Left colon (tissue), 2 donors: ENCODE measurements at regions of chr15 and their contacts with region 1.

Region 1: GRCh38 chr15:72671535-72671934 is 14.4 kb downstream of the HIGD2B start:
- DNase-seq: no peak
- ATAC-seq: no peak

Region 2: GRCh38 chr15:72464251-72464650 is 207.3 kb before region 1 on chr15:
- intact Hi-C with region 1: loop called in 1 of 2 experiments (anchors 10 kb)
- DNase-seq: no peak
- ATAC-seq: no peak

Region 3: DNA sequence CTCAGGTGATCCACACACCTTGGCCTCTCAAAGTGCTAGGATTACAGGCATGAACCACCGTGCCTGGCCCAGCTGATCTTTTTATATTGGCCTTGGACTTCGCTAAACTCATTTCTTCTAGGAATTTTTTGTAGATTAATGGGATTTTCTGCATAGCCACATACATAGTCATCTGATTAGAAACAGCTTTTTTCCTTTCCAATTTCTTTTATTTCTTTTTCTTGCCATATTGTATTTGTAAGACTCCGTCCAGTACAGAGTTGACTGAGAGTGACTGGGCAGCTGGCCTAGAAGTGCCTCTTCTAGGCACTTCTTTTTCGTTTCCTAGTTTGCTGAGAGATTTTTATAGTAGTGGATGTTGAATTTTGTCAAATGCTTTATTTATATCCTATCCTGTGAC is 160.0 kb before region 1 on chr15:
- intact Hi-C with region 1: no loop called
- DNase-seq: no peak
- ATAC-seq: no peak

Region 4: DNA sequence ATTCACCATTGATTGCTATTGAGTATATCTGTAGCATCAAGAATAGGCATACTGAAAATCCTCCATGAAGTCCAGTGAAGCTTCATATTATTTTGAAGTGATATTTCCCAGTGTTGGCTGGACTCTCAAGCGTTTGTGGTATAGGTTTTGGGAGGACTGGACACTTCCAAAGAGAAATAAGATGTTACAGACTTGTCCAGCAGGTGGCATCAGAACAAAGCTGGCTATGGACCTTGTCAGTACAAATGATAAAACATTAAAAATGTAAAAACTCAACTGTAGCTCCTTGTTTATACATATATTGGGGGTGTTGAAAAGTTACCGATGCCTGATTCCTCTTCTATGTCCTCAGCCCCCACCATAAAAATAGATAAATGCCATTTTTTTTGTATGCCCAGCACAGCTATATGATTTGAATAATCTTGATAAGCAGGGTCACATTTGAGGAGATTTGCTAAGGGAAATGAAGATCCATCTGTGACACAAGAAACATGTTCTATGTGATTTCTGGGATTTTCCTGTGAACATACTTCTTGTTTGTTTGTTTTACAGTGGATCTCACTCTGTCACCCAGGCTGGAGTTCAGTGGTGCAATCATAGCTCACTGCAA is 71.6 kb before region 1 on chr15:
- intact Hi-C with region 1: loop called in 1 of 2 experiments (anchors 10 kb)
- DNase-seq: peak in 1 of 2 donors; percentile 25
- ATAC-seq: peak; percentile 56